HCT116 (cell line): ENCODE measurements at regions of chr7 and their contacts with region 1.

Region 1: GRCh38 chr7:19491821-19492452 is 216.9 kb downstream of the POLR1F start:
- DNase-seq: peak; percentile 28
- ATAC-seq: no peak
- H3K4me3 ChIP-seq: no peak overlapping the region
- H3K27ac ChIP-seq: no peak overlapping the region
- H3K4me1 ChIP-seq: no peaks in the 10 kb centered on the region
- H3K27me3 ChIP-seq: no peaks in the 10 kb centered on the region
- CTCF ChIP-seq: peak; percentile 12 to 64 (median 56); a peak in 4 of 6 replicates
- POLR2A ChIP-seq: no peak
- RAD21 ChIP-seq: peak; percentile 25; the same call in 1 of the 2 replicates

Region 2: DNA sequence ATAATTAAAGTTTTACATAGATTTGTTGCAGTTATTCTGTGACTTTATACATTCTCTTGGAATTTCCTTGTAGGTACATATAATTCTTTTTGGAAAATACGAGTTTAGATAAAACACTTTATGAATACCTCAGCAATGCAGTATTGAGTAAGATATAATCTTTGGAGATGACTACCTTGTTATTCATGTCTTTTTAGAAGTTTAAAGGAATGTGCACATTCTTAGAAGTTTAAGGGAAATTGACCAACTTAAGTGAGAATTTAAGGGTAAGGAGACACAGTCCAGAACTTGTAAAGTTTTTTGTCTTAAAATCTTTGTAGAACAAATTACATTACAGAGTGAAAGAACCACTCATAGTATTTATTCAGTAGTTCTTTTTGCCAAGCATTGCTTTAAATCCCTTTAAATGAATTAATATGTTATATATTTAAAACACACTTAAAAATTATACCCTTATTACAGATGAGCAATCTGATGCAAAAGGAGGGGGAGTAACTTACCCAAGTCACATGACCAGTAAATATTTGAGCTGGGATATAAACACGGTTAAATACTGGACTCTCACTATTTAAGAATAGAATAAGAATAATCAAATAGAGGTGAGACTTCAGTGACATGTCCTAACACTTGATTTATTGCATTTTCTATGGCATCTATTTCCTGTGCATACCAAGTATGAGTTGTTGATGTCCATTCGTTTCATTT is 207.2 kb before region 1 on chr7:
- CTCF ChIA-PET with region 1: no interaction called
- POLR2A ChIA-PET with region 1: no interaction called
- RAD21 ChIA-PET with region 1: no interaction called
- intact Hi-C with region 1: no loop called
- DNase-seq: no peak
- ATAC-seq: no peak
- H3K4me3 ChIP-seq: no peak overlapping the region
- H3K27ac ChIP-seq: no peak overlapping the region
- H3K4me1 ChIP-seq: no peaks in the 10 kb centered on the region
- H3K27me3 ChIP-seq: no peaks in the 10 kb centered on the region
- CTCF ChIP-seq: no peak
- POLR2A ChIP-seq: no peak
- RAD21 ChIP-seq: no peak

Region 3: GRCh38 chr7:19508124-19508523 is 16.2 kb after region 1 on chr7:
- CTCF ChIA-PET with region 1: interaction called, 15 read pairs
- POLR2A ChIA-PET with region 1: no interaction called
- RAD21 ChIA-PET with region 1: no interaction called
- intact Hi-C with region 1: no loop called
- DNase-seq: no peak
- ATAC-seq: no peak
- H3K4me3 ChIP-seq: no peak overlapping the region
- H3K27ac ChIP-seq: no peak overlapping the region
- H3K4me1 ChIP-seq: peaks cover 3 to 12% of the 10 kb centered on the region in 2 experiments; a peak in 2 of 4 replicates
- H3K27me3 ChIP-seq: no peaks in the 10 kb centered on the region
- CTCF ChIP-seq: no peak
- POLR2A ChIP-seq: no peak
- RAD21 ChIP-seq: no peak